Activated CD4-positive, alpha-beta memory T cell treated with anti-CD3 and anti-CD28 coated beads, Interleukin-2, amount 10 ng/mL, durations not matched to agents 7 days and 5 days (primary cell): ENCODE measurements at regions of chr4 and their contacts with region 1.

Region 1: DNA sequence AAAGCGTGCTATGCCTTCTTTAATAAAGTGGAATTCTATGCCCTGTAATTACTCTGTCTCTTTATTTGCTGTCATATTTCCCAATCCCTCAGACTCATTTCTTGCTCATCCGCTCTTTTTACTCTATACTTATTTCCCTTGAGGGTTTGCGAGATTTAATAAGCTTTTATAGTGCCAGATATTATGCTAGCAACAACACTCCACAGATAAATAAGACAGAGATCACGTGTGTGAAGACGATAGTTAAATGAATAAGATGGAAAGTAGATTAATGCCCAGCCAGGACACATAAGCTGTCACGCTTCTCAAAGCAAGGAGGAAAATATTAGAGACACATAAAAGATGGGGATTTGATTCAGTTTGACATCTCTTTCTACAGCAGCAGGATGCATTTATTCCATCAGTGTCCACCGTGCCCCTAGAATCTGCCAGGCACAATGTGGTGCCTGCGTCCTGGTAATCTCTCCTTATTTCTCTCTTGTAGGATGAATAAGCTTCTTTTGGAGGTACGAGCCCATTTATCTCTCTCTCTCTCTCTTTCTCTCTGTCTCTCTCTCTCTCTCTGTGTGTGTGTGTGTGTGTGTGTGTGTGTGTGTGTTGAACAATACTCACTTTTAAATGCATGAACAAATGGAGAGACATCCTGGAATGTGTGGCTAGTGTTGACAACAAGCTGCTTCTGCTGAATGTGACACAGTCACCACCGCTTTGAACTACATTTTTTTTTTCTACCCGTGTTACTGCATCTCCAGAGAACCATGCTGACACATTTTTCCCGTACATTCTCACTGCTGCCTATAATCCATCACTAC is 48.2 kb downstream of the TMEM156 start:
- DNase-seq: no peak
- H3K4me3 Mint-ChIP-seq: peak overlapping the region; percentile 31
- H3K27ac Mint-ChIP-seq: peak overlapping the region; percentile 83
- H3K4me1 Mint-ChIP-seq: peaks cover 75% of the 10 kb centered on the region
- H3K27me3 Mint-ChIP-seq: no peaks in the 10 kb centered on the region

Region 2: GRCh38 chr4:38958453-38959190 is 25.4 kb before region 1 on chr4:
- CTCF ChIA-PET with region 1: no interaction called
- POLR2A ChIA-PET with region 1: interaction called, 13 read pairs
- DNase-seq: no peak
- H3K4me3 Mint-ChIP-seq: no peak overlapping the region
- H3K27ac Mint-ChIP-seq: peak overlapping the region; percentile 55
- H3K4me1 Mint-ChIP-seq: peaks cover 25% of the 10 kb centered on the region
- H3K27me3 Mint-ChIP-seq: no peaks in the 10 kb centered on the region

Region 3: DNA sequence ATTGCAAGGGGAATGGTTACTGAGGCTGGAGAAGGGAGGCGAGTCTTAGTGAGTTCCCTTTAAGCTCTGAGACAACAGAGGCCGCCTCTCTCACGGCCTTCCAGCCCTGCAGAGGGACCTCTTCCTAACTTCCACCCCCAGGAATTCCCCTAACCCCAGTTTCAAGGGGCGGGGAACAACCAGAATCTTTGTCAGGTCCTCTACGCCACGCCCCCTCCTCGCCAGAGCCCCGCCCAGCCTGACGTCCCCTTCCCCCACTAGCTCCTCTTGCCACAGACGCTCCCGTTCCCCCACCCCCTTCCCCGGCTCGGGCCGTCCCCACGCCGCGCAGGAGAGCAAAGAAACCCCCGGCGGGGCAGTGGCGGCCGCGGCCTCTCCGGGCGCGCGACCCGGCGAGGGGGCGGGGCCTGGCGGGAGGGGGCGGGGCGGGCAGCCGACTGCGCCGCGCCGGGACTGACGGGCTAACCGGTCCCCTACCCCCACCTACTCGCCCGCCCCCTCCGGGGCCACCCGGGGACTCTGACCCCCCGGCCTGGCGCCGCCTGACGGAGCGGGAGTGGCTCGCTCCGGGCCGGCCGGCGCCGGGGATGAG is 60.5 kb after region 1 on chr4:
- CTCF ChIA-PET with region 1: interaction called, 3 read pairs
- POLR2A ChIA-PET with region 1: interaction called, 16 read pairs
- DNase-seq: peak; percentile 94
- H3K4me3 Mint-ChIP-seq: peak overlapping the region; percentile 80
- H3K27ac Mint-ChIP-seq: peak overlapping the region; percentile 82
- H3K4me1 Mint-ChIP-seq: peaks cover 56% of the 10 kb centered on the region
- H3K27me3 Mint-ChIP-seq: no peaks in the 10 kb centered on the region